Left ventricle myocardium superior (tissue), 1 donor: ENCODE measurements at regions of chr6 and their contacts with region 1.

Region 1: DNA sequence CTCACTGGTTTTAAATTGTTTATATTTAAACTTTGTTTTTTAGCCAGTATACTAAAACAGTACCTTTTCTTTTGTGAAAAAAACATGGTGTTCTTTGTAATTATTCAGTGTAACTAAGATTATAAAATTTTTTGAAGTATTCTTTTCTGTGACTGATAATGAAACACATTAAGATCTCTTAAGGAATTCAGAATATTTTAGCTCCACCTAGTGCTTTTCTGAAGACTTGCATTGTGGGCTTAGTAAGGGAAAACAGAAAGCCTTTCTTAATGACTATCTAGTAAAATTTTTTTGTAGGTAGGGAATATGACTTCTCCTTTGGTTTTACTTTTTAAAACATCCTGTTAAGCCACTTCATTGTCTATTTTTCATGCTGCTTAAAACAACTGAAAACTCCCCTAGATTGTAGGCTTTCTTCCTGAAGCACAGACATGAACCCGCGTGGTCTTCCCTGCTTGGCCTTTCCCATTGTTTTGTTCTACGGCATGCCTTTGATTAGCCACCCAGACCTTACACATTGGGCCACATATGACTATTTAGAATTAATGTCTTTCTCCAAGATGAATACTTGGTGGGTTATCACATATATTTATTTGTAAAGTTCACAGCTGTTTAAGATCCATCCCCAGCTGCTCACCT is 72.1 kb downstream of the AFDN start:
- DNase-seq: no peak
- ATAC-seq: peak; percentile 41

Region 2: DNA sequence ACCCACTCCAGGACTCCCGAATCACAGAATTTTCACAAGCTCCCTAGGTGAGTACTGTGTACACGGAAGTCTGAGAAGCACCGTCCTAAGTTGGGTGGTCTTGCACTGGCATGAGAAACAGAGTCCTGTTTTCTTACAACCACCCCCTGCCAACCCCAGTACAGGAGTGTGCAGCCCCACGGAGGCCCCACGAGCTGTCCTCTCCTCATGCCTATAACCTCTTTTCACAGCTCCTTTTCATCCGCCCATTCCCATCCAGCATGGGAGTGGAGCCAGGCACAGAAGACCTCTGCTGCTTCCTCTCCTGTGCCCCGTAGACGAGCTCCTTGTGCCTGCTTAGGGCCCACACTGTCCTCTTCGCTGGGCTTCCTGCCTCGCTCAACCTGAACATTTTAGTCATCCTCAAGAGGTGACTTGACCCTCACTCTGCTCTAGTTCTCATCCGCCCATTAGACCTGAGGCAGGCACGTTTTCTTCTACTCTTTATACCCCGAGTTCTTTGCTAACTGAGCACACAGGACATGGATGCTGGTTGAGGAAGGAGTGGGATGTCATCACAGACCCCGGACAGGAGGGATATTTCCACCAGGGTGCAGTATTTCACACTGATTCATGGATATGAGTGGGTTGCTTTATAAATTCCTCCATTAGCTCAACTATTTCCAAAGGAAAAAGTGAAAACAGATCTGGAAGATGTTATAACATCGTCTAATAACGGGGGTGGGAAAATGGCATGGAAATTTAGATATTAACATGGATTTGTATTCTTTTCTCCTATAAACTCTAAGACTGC is 413.4 kb before region 1 on chr6:
- intact Hi-C with region 1: loop called (anchors 5 kb)
- DNase-seq: no peak
- ATAC-seq: peak; percentile 87